ENCODE measurements at regions of chr21 and their contacts with region 1.

Region 1: GRCh38 chr21:43903451-43904091 is 38.5 kb downstream of the AGPAT3 start:
- DNase-seq: no peak
- ATAC-seq: peak; percentile 75

Region 2: DNA sequence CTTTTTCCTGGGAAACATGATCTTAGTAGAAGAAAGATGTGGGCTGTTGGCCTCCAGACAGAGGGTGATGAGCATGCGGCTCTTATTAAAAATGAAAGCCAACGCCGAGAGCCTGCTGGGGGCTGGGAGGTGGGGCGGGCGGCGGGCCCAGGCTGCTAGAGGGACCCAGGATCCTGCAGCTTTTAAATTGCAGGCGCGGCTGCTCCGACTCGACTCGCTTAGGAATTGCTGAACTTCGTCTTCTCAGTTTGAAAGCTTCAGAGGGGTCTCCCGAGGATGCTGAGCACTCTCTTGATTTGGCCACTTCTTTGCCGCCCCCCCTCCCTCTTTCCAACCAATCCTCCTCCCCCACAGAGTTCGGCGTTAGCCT is 37.3 kb before region 1 on chr21:
- intact Hi-C with region 1: loop called (anchors 1 kb)
- DNase-seq: no peak
- ATAC-seq: peak; percentile 42

Region 3: GRCh38 chr21:43929217-43930025 is 25.9 kb after region 1 on chr21:
- intact Hi-C with region 1: loop called (anchors 2 kb)
- DNase-seq: peak; percentile 86
- ATAC-seq: peak; percentile 91

Measured in Right ventricle myocardium inferior (tissue), 1 donor.